ENCODE measurements at regions of chr15 and their contacts with region 1.

Region 1: DNA sequence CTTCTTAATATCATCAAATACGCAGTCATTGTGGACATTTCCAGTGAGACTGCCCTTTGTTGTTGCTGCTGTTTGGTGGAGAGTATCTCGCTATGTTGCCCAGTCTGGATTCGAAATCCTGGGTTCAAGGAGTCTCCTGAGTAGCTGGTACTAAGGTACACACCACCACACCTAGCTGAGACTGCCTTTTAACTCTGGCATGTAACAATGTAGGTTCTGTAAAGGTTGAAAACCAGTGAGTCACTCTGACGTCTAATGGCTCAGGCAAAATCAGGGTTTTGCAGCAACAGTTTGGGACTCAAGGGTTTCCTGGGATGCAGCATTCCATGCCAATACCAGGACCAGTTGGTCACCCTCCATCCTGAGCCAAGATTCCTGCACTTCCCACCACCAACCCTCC is 52.2 kb downstream of the AQP9 start:
- DNase-seq: no peak
- ATAC-seq: no peak
- H3K4me3 ChIP-seq: no peak overlapping the region
- H3K27ac ChIP-seq: no peak overlapping the region
- H3K4me1 ChIP-seq: no peaks in the 10 kb centered on the region
- H3K27me3 ChIP-seq: peaks cover 12% of the 10 kb centered on the region
- CTCF ChIP-seq: no peak

Region 2: DNA sequence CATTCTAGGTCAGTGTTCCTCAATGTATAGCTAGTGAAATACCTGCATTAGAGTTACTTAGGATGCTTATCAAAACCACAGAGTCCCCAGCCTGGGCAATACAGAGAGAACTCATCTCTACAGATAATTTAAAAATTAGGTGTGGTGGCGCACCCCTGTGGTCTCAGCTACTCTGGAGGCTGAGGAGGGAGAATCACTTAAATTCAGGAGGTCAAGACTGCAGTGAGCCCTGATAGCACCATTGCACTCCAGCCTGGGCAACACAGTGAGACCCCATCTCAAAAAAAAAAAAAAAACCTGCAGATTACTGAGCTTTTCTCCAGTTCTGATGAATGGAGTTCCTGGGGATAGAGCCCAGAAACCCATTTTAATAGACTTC is 570.6 kb after region 1 on chr15:
- CTCF ChIA-PET with region 1: no interaction called
- POLR2A ChIA-PET with region 1: interaction called, 12 read pairs
- in situ Hi-C with region 1: no loop called
- intact Hi-C with region 1: no loop called
- DNase-seq: no peak
- ATAC-seq: no peak
- H3K4me3 ChIP-seq: no peak overlapping the region
- H3K27ac ChIP-seq: no peak overlapping the region
- H3K4me1 ChIP-seq: no peaks in the 10 kb centered on the region
- H3K27me3 ChIP-seq: no peaks in the 10 kb centered on the region
- CTCF ChIP-seq: peak; percentile 26

Measured in Panc1 (cell line).